MCF 10A (cell line): ENCODE measurements at regions of chr4 and their contacts with region 1.

Region 1: DNA sequence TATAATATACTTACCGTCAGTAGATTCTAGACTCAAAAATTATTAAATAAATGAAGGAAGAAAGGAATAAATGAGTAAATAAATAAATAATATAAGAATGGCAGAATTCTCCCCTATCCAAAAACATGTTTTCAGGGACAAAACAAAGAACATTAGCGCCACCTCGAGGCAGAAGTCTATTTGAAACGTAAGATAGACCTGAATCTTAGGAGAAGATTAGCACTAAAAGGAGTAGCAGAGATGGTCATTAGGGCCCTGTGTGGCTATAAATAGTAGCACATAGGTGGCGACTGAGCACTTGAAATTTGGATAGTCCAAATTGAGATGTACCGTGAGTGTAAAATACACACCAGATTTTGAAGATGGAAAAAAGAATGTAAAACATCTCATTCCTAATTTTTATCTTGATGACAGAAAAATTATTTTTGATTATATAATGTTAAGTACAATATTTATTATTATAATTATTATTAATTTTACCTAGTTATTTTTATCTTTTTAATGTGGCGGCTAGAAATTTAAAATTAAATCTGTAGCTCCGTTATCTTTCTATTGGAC is 24.3 kb upstream of the SRD5A3 start:
- DNase-seq: peak; percentile 91
- H3K4me3 Mint-ChIP-seq: no peak overlapping the region
- H3K27ac Mint-ChIP-seq: no peak overlapping the region
- H3K4me1 Mint-ChIP-seq: peaks cover 14% of the 10 kb centered on the region
- H3K27me3 Mint-ChIP-seq: no peaks in the 10 kb centered on the region
- CTCF ChIP-seq: peak; percentile 63

Region 2: GRCh38 chr4:54683616-54684346 is 638.0 kb before region 1 on chr4:
- CTCF ChIA-PET with region 1: no interaction called
- POLR2A ChIA-PET with region 1: no interaction called
- intact Hi-C with region 1: loop called (anchors 10 kb)
- DNase-seq: peak; percentile 72
- H3K4me3 Mint-ChIP-seq: no peak overlapping the region
- H3K27ac Mint-ChIP-seq: no peak overlapping the region
- H3K4me1 Mint-ChIP-seq: peaks cover 5% of the 10 kb centered on the region
- H3K27me3 Mint-ChIP-seq: no peaks in the 10 kb centered on the region
- CTCF ChIP-seq: no peak

Region 3: GRCh38 chr4:54976682-54977081 is 345.1 kb before region 1 on chr4:
- CTCF ChIA-PET with region 1: interaction called, 113 read pairs
- POLR2A ChIA-PET with region 1: interaction called, 13 read pairs
- intact Hi-C with region 1: loop called (anchors 1 kb)
- DNase-seq: no peak
- H3K4me3 Mint-ChIP-seq: no peak overlapping the region
- H3K27ac Mint-ChIP-seq: no peak overlapping the region
- H3K4me1 Mint-ChIP-seq: peaks cover 5% of the 10 kb centered on the region
- H3K27me3 Mint-ChIP-seq: no peaks in the 10 kb centered on the region
- CTCF ChIP-seq: no peak

Region 4: GRCh38 chr4:55008166-55009070 is 313.4 kb before region 1 on chr4:
- CTCF ChIA-PET with region 1: interaction called, 26 read pairs
- POLR2A ChIA-PET with region 1: interaction called, 3 read pairs
- intact Hi-C with region 1: no loop called
- DNase-seq: peak; percentile 39
- H3K4me3 Mint-ChIP-seq: no peak overlapping the region
- H3K27ac Mint-ChIP-seq: peak overlapping the region; percentile 36
- H3K4me1 Mint-ChIP-seq: no peaks in the 10 kb centered on the region
- H3K27me3 Mint-ChIP-seq: no peaks in the 10 kb centered on the region
- CTCF ChIP-seq: peak; percentile 32

Region 5: DNA sequence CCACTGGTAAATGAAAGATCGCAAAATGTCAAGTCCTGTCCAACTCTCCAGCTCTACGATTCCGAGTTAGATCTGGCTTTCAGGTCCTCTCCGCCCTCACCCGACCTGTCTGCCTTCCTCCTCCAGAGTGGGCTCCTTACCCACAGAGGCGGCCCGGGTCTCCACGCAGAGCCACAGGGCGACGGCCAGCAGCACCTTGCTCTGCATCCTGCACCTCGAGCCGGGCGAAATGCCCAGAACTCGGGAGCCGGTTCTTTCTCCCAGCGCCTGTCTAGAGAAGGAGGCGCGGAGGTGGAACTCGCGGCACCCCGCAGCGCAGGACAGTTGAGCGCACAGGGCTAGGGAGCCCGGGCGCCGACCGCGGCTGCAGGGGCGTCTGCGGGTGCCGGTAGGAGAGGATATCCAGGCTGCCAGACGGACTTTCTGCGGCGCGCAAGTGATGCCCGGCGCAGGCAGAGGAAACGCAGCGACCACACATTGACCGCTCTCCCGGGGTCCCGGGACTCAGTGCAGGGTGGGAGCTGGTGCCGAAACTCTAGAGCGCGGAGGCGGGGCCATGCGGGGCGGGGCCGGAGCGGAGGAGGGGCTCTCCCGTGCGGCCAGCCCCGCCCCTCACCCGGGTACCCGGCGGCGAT is 196.6 kb before region 1 on chr4 and contains the start of gene KDR:
- CTCF ChIA-PET with region 1: no interaction called
- POLR2A ChIA-PET with region 1: no interaction called
- intact Hi-C with region 1: no loop called
- DNase-seq: peak; percentile 34
- H3K4me3 Mint-ChIP-seq: peak within 1 kb of the TSS; percentile 76
- H3K27ac Mint-ChIP-seq: no peak within 1 kb of the TSS
- H3K4me1 Mint-ChIP-seq: peaks cover 5% of the 10 kb centered on the region
- H3K27me3 Mint-ChIP-seq: no peaks in the 10 kb centered on the region
- CTCF ChIP-seq: no peak
- total RNA-seq, gene KDR: 0.34 and 0.37 TPM in 2 replicates

Region 6: DNA sequence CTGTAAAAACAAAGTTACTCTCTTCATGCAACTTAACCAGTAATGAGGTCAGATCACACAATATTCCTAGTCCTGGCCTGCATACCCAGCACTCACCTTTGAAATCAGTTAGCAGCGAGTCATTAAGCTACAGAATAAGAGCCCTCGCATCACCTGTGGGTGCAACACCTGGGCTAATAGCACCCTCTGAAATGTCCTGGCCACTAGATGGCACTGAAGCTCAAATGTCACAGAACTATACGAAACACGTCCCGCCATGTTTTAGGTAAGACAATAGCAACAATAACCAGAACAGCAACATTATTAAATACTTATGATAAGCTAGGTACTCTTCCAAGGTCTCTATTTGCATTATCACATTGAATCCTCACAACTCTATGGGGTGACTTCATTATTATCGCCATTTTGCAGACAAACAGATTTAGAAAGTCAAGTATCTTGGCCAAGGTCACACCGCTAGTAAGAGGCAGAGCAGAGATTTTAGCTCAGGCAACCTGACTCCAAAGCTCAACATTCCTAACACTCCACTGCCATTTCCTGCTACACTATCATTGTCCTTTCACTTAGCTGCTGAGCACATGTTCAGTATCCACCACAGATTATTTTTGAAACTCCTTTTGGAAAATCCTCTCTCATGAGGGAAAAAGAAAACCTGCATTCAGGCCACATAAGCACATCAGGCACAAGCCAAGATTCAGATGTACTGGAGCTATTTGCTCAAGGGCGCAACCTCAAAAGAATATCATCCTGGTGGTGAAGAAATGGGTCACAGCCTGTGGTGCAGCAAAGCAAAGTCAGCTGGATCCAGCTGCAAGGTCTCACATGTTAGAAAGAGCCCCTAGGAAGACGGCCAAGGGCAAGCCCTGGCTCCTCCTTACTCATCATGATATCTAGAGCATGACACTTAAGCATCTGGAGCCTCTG is 136.9 kb before region 1 on chr4:
- CTCF ChIA-PET with region 1: interaction called, 31 read pairs
- POLR2A ChIA-PET with region 1: no interaction called
- intact Hi-C with region 1: no loop called
- DNase-seq: peak; percentile 47
- H3K4me3 Mint-ChIP-seq: no peak overlapping the region
- H3K27ac Mint-ChIP-seq: peak overlapping the region; percentile 84
- H3K4me1 Mint-ChIP-seq: peaks cover 29% of the 10 kb centered on the region
- H3K27me3 Mint-ChIP-seq: no peaks in the 10 kb centered on the region
- CTCF ChIP-seq: peak; percentile 37